Sigmoid colon (tissue), 7 donors: ENCODE measurements at regions of chr5 and their contacts with region 1.

Region 1: GRCh38 chr5:42767491-42768105 is 11.0 kb downstream of the CCDC152 start:
- DNase-seq: no peak
- H3K4me3 ChIP-seq: no peak overlapping the region
- H3K27ac ChIP-seq: no peak overlapping the region
- H3K4me1 ChIP-seq: no peaks in the 10 kb centered on the region
- H3K27me3 ChIP-seq: no peaks in the 10 kb centered on the region
- CTCF ChIP-seq: peak in 2 of 4 experiments; percentile 16 to 49
- EP300 ChIP-seq: no peak
- POLR2A ChIP-seq: no peak

Region 2: DNA sequence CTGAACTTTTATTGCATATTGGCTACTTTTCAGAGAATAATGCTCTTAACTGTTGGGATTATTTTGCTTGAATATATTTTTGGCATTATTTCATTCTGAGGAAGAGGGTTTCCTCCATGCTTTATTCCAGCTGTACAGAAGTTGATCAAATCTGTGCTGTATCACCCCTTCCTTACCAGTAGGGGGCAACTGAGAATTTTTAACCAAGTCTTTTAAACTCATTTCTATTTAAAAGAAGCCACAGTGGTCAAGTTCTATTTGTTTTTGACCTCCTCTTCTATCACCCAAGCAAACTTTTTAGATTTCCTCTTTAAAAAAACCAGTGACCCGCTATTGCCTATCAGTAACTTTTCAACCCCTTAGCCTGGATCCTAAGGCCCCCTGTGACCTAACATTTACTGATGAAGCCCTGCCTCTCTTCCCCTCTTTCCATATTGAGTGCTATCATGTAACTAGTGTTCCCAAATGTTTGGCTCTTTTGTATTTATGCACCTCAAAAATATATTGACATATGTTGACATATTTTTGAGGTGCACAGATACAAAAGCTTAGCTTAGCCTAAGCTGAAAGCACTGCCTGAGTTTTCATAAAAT is 761.9 kb before region 1 on chr5:
- intact Hi-C with region 1: loop called (anchors 2 kb)
- DNase-seq: no peak
- H3K4me3 ChIP-seq: no peak overlapping the region
- H3K27ac ChIP-seq: no peak overlapping the region
- H3K4me1 ChIP-seq: no peaks in the 10 kb centered on the region
- H3K27me3 ChIP-seq: no peaks in the 10 kb centered on the region
- CTCF ChIP-seq: peak; percentile 18 to 61 (median 48)
- EP300 ChIP-seq: no peak
- POLR2A ChIP-seq: no peak

Region 3: GRCh38 chr5:42828671-42829070 is 61.1 kb after region 1 on chr5:
- intact Hi-C with region 1: no loop called
- DNase-seq: no peak
- H3K4me3 ChIP-seq: no peak overlapping the region
- H3K27ac ChIP-seq: no peak overlapping the region
- H3K4me1 ChIP-seq: peaks cover 0 to 19% (median 11%) of the 10 kb centered on the region in 4 donors
- H3K27me3 ChIP-seq: no peaks in the 10 kb centered on the region
- CTCF ChIP-seq: no peak
- EP300 ChIP-seq: no peak
- POLR2A ChIP-seq: no peak

Region 4: DNA sequence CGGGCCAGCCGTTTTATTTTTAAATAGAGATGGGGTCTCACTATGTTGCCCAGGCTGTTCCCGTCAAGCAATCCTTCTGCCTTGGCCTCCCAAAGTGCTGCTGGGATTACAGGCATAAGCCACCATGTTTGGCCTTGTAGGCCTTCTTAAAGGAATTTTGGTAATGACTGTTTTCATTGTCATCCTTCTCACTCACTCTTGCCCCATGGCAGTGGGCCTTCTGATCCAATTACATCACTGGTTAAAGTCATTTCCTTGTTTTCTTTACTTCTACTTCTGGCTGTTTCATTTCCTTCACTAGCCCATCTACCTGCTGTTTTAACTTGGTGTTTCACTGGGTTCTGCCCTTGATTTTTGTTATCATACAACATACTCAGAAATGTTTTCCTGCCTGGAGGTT is 404.3 kb after region 1 on chr5:
- intact Hi-C with region 1: no loop called
- DNase-seq: no peak
- H3K4me3 ChIP-seq: no peak overlapping the region
- H3K27ac ChIP-seq: no peak overlapping the region
- H3K4me1 ChIP-seq: no peaks in the 10 kb centered on the region
- H3K27me3 ChIP-seq: no peaks in the 10 kb centered on the region
- CTCF ChIP-seq: no peak
- EP300 ChIP-seq: no peak
- POLR2A ChIP-seq: no peak